ENCODE measurements at regions of chr10 and their contacts with region 1.

Region 1: DNA sequence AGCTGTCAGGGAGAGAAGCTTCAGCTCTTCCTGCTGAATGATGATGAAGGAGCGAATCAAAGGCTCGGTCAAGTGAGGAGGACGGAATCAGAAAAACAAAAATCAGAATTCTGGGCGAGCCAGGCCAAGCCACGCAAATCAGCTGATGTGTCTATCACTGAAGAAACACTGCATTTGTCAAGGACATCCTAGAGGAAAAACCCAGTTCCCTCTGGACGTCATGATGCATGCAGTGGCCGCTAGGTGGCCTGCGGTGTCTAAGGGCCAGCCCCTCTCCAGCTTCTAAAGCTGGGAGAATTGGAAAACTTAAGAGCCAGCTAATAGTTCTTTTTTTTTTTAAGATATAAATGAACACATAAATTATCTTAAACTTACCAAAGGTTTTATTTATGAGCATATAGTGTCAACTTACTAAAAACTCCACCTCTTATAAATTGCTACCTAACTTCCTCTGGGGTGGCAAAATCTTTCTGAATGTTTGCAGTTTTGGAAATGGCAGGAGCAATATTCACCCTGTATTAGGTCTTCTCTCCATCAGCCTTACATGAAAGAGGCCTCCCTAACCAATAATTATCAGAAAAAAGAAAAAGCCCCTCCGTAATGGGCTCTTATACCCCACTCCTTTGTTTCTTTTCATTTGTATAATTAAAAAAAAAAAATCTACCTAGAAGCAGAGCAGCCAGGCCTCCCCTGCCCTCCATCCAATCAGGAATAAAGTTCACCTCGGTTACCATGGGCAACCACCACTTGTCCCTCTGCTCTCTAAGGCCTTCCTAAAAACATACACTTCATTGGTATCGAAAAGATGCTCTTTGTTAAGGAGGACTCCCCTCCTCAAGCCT is 186.8 kb downstream of the USP6NL start:
- DNase-seq: peak; percentile 76
- H3K4me3 ChIP-seq: peak overlapping the region in 1 of 2 experiments; percentile 26; a peak in 1 of 4 replicates
- H3K27ac ChIP-seq: no peak overlapping the region
- H3K4me1 ChIP-seq: no peaks in the 10 kb centered on the region; a peak in 1 of 4 replicates
- H3K27me3 ChIP-seq: no peaks in the 10 kb centered on the region
- CTCF ChIP-seq: peak; percentile 73
- EP300 ChIP-seq: no peak
- RAD21 ChIP-seq: peak; percentile 74

Region 2: GRCh38 chr10:11448190-11448544 is 23.5 kb after region 1 on chr10:
- CTCF ChIA-PET with region 1: interaction called, 10 read pairs
- POLR2A ChIA-PET with region 1: no interaction called
- DNase-seq: no peak
- H3K4me3 ChIP-seq: no peak overlapping the region
- H3K27ac ChIP-seq: no peak overlapping the region
- H3K4me1 ChIP-seq: peaks cover 0 to 4% of the 10 kb centered on the region in 2 experiments; a peak in 1 of 4 replicates
- H3K27me3 ChIP-seq: no peaks in the 10 kb centered on the region
- CTCF ChIP-seq: no peak
- EP300 ChIP-seq: no peak
- RAD21 ChIP-seq: no peak

Region 3: GRCh38 chr10:11472158-11472753 is 47.6 kb after region 1 on chr10:
- CTCF ChIA-PET with region 1: interaction called, 12 read pairs
- POLR2A ChIA-PET with region 1: no interaction called
- DNase-seq: peak; percentile 69
- H3K4me3 ChIP-seq: no peak overlapping the region
- H3K27ac ChIP-seq: no peak overlapping the region; a peak in 1 of 4 replicates
- H3K4me1 ChIP-seq: peaks cover 0 to 4% of the 10 kb centered on the region in 2 experiments; a peak in 2 of 4 replicates
- H3K27me3 ChIP-seq: no peaks in the 10 kb centered on the region
- CTCF ChIP-seq: peak; percentile 80
- EP300 ChIP-seq: no peak
- RAD21 ChIP-seq: peak; percentile 90